ENCODE measurements at regions of chr6 and their contacts with region 1.

Region 1: GRCh38 chr6:30828027-30828960 is 56.0 kb upstream of the DDR1 start:
- DNase-seq: peak; percentile 86 to 94
- ATAC-seq: peak; percentile 89 to 93
- H3K4me3 ChIP-seq: peak overlapping the region in 2 of 4 donors; percentile 31 to 42
- H3K27ac ChIP-seq: peak overlapping the region; percentile 85 to 94 (median 92)
- H3K4me1 ChIP-seq: peaks cover 28 to 31% of the 10 kb centered on the region in 2 donors
- H3K27me3 ChIP-seq: no peaks in the 10 kb centered on the region
- CTCF ChIP-seq: peak; percentile 88 to 97 (median 93)
- POLR2A ChIP-seq: peak in 1 of 2 donors; percentile 52

Region 2: GRCh38 chr6:30020626-30021025 is 807.7 kb before region 1 on chr6:
- in situ Hi-C with region 1: no loop called
- intact Hi-C with region 1: no loop called
- DNase-seq: no peak
- ATAC-seq: no peak
- H3K4me3 ChIP-seq: no peak overlapping the region
- H3K27ac ChIP-seq: no peak overlapping the region
- H3K4me1 ChIP-seq: no peaks in the 10 kb centered on the region
- H3K27me3 ChIP-seq: no peaks in the 10 kb centered on the region
- CTCF ChIP-seq: no peak
- POLR2A ChIP-seq: no peak

Region 3: GRCh38 chr6:30686908-30687658 is 141.2 kb before region 1 on chr6:
- in situ Hi-C with region 1: loop called in 1 of 4 experiments (anchors 10 kb)
- intact Hi-C with region 1: no loop called
- DNase-seq: peak; percentile 89 to 94
- ATAC-seq: peak; percentile 47 to 60
- H3K4me3 ChIP-seq: peak overlapping the region; percentile 67 to 97 (median 96)
- H3K27ac ChIP-seq: peak overlapping the region; percentile 93 to 99 (median 97)
- H3K4me1 ChIP-seq: peaks cover 39 to 40% of the 10 kb centered on the region in 2 donors
- H3K27me3 ChIP-seq: peaks cover 0 to 2% (median 0%) of the 10 kb centered on the region in 3 donors
- CTCF ChIP-seq: no peak
- POLR2A ChIP-seq: peak; percentile 66 to 70

Region 4: DNA sequence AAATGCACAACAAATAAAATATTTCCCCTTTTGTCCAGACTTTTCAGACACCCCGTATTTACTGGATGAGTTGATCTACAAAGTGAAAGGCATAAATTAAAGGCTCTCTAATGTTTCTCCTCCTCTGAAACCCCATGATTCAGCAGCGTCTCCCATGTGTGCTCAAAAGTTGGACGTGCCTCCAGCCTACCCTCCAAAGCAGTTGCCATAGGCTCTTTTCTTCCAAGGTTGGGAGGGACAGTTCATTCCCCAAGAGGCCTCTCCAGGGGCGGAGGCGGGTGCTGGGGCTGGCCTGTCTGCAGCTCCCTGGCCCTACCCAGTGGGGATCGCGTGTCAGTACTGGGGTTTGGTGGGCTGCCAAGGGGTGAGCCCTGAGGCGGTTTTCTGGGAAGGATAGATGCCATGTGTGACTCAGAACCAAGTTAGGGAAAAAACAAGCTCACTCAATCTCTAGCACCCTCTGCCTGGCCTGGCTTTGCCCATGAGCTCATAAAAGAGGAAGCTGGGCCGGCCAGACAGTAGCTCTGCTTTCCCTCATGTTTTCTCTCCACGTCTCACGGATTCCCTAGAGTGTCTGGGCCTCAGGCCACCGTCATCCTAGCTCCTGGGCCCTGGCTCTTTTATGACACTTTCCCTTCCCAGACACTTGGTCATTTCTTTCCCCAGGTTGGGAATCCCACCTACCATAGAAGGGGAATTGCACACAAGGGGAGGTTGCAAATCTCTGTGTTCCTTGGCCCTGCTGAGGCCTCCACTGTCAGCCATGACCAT is 76.0 kb before region 1 on chr6:
- in situ Hi-C with region 1: loop called in 2 of 4 experiments (anchors 5 to 10 kb)
- intact Hi-C with region 1: loop called (anchors 2 kb)
- DNase-seq: peak; percentile 93 to 98
- ATAC-seq: peak; percentile 97
- H3K4me3 ChIP-seq: peak overlapping the region in 2 of 4 donors; percentile 0 to 1
- H3K27ac ChIP-seq: peak overlapping the region; percentile 86 to 95 (median 92)
- H3K4me1 ChIP-seq: peaks cover 19 to 22% of the 10 kb centered on the region in 2 donors
- H3K27me3 ChIP-seq: no peaks in the 10 kb centered on the region
- CTCF ChIP-seq: peak in 3 of 5 experiments; percentile 12 to 19 (median 13)
- POLR2A ChIP-seq: peak; percentile 19 to 31

Region 5: DNA sequence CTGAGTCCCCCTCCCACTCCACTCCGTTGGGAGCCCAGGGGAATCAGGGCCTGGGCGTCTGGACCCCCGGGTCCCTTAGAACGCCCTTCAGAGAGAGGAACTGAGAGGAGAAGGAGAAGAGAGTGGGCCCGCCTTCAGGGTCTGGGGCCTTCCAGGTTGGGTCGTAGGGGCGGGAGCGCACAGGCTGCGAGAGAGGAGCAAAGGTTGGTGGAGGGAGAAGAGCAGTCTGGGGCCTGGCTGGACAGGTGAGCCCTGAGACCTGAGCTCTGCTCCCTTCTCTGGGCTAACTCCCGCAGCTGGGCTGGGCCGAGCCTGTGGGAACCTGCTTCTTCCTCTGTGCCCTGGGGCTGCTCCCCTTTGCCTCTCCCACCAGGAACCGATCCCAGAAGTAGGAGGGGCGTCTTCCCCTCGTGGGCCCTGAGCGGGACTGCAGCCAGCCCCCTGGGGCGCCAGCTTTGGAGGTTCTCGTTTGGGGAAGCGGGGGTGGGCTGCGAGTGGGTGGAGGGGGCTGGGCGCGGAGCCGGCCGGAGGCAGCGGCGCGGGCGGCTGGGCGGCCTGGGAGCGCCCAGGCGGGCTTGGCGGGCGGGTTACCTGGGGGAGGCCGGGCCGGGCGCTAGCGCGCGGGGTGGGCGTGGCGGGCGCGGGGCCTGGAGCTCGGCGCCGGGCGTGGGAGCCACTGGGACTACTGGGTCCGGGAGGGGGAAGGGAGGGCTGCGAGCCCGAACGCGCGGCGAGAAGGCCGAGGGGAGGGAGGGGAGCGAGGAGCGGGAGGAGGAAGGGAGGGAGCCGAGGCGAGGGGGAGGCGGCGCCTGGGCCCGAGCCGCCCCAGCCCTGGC is 55.6 kb after region 1 on chr6 and contains the start of gene DDR1:
- in situ Hi-C with region 1: loop called (anchors 5 to 10 kb)
- intact Hi-C with region 1: loop called (anchors 2 kb)
- DNase-seq: peak; percentile 65 to 89
- ATAC-seq: peak; percentile 6 to 45
- H3K4me3 ChIP-seq: peak within 1 kb of the TSS; percentile 66 to 92 (median 78)
- H3K27ac ChIP-seq: peak within 1 kb of the TSS; percentile 89 to 97 (median 94)
- H3K4me1 ChIP-seq: peaks cover 56 to 63% of the 10 kb centered on the region in 2 donors
- H3K27me3 ChIP-seq: no peaks in the 10 kb centered on the region
- CTCF ChIP-seq: no peak
- POLR2A ChIP-seq: no peak
- total RNA-seq, gene DDR1: 20.0 to 62.2 (median 59.3) TPM

Region 6: GRCh38 chr6:30895341-30895740 is 67.0 kb after region 1 on chr6:
- in situ Hi-C with region 1: no loop called
- intact Hi-C with region 1: no loop called
- DNase-seq: no peak
- ATAC-seq: no peak
- H3K4me3 ChIP-seq: no peak overlapping the region
- H3K27ac ChIP-seq: no peak overlapping the region
- H3K4me1 ChIP-seq: no peaks in the 10 kb centered on the region
- H3K27me3 ChIP-seq: no peaks in the 10 kb centered on the region
- CTCF ChIP-seq: no peak
- POLR2A ChIP-seq: no peak

Region 7: GRCh38 chr6:31087494-31088089 is 259.3 kb after region 1 on chr6:
- in situ Hi-C with region 1: loop called in 2 of 4 experiments (anchors 5 to 10 kb)
- intact Hi-C with region 1: no loop called
- DNase-seq: peak; percentile 59 to 73
- ATAC-seq: peak; percentile 93 to 99
- H3K4me3 ChIP-seq: peak overlapping the region in 3 of 4 donors; percentile 11 to 36 (median 13)
- H3K27ac ChIP-seq: peak overlapping the region in 3 of 4 donors; percentile 1 to 36 (median 25)
- H3K4me1 ChIP-seq: peaks cover 8 to 9% of the 10 kb centered on the region in 2 donors
- H3K27me3 ChIP-seq: no peaks in the 10 kb centered on the region
- CTCF ChIP-seq: peak; percentile 74 to 82 (median 81)
- POLR2A ChIP-seq: no peak